Mammary epithelial cell (primary cell): ENCODE measurements at regions of chr14 and their contacts with region 1.

Region 1: DNA sequence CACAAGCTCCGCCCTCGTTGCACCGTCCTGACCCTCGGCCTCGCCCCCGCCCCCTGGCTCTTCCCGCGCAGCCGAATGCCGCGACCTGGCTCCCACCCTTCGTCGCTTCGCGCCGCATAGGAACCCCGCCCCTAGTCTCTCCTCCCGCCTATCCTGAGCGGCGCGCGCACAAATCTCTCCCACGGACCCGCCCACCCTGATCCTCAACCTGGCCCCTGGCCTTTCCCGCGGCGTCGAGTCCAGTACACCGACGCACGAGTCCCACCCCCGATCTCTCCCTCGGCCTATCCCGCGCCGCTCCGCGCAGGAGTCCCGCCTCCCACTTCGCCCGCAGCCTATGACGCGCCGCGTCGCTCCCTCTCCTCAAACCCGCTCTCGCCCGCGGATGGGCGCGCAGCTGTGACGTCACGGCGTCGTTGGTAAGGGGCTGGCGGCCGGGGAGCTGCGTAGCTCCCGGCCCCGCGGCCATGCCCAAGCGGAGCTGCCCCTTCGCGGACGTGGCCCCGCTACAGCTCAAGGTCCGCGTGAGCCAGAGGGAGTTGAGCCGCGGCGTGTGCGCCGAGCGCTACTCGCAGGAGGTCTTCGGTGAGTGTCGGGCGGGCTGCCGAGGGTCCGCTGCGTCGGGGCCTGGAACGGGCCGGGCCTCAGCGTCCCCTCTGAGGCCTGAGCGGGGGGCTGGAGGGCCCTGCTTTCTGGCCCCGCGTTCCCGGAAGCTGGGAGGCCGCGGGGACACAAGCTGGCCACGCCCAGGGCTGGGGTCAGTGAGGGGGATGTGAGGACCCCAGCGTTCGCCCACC is at the start of gene SIVA1:
- DNase-seq: peak; percentile 99
- H3K4me3 ChIP-seq: peak within 1 kb of the TSS; percentile 67 to 98 (median 97)
- H3K27ac ChIP-seq: peak within 1 kb of the TSS; percentile 63
- H3K4me1 ChIP-seq: peaks cover 37% of the 10 kb centered on the region
- H3K27me3 ChIP-seq: no peaks in the 10 kb centered on the region
- CTCF ChIP-seq: no peak
- total RNA-seq, gene SIVA1: 43.3 to 56.1 TPM

Region 2: DNA sequence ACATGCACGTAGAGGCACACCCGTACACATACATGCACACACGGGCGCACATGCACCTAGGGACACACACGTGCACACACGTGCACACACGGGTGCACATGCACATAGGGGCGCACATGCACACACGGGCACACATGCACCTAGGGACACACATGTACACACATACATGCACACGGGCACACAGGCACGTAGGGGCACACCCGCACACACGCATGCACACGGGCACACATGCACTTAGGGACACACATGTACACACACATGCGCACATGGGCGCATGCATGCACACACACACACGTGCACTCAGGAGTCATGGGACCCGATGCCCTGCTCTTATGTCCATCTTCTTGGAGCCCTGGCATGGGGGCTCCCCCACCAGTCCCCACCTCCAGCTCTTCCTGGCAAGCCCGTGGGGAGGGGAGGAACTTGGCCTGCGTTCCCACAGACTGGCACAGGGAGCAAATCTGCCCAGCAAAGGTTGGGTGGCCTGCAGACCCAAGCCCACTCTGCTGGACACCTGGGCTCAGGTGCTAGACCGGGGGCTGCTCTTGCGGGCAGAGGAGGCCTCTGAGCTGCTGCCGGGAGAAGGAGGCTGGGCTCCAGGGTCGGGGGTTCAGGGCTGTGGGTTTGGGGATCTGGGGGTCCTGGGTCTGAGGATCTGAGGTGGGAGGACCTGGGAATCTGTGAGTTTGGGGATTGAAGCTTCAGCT is 563.2 kb before region 1 on chr14:
- CTCF ChIA-PET with region 1: interaction called, 12 read pairs
- dilution Hi-C with region 1: no loop called
- in situ Hi-C with region 1: no loop called
- intact Hi-C with region 1: no loop called
- DNase-seq: no peak
- H3K4me3 ChIP-seq: no peak overlapping the region
- H3K27ac ChIP-seq: no peak overlapping the region
- H3K4me1 ChIP-seq: no peaks in the 10 kb centered on the region
- H3K27me3 ChIP-seq: no peaks in the 10 kb centered on the region
- CTCF ChIP-seq: no peak

Region 3: GRCh38 chr14:104708606-104709268 is 44.2 kb before region 1 on chr14:
- CTCF ChIA-PET with region 1: no interaction called
- dilution Hi-C with region 1: loop called (anchors 5 kb)
- in situ Hi-C with region 1: no loop called
- intact Hi-C with region 1: no loop called
- DNase-seq: no peak
- H3K4me3 ChIP-seq: no peak overlapping the region
- H3K27ac ChIP-seq: no peak overlapping the region
- H3K4me1 ChIP-seq: no peaks in the 10 kb centered on the region
- H3K27me3 ChIP-seq: no peaks in the 10 kb centered on the region
- CTCF ChIP-seq: peak; percentile 97 to 99

Region 4: GRCh38 chr14:104795788-104796686 is 43.1 kb after region 1 on chr14:
- CTCF ChIA-PET with region 1: no interaction called
- dilution Hi-C with region 1: no loop called
- in situ Hi-C with region 1: no loop called
- intact Hi-C with region 1: loop called (anchors 2 kb)
- DNase-seq: no peak
- H3K4me3 ChIP-seq: peak overlapping the region in 2 of 3 experiments; percentile 46 to 88
- H3K27ac ChIP-seq: no peak overlapping the region
- H3K4me1 ChIP-seq: peaks cover 38% of the 10 kb centered on the region
- H3K27me3 ChIP-seq: no peaks in the 10 kb centered on the region
- CTCF ChIP-seq: no peak

Region 5: DNA sequence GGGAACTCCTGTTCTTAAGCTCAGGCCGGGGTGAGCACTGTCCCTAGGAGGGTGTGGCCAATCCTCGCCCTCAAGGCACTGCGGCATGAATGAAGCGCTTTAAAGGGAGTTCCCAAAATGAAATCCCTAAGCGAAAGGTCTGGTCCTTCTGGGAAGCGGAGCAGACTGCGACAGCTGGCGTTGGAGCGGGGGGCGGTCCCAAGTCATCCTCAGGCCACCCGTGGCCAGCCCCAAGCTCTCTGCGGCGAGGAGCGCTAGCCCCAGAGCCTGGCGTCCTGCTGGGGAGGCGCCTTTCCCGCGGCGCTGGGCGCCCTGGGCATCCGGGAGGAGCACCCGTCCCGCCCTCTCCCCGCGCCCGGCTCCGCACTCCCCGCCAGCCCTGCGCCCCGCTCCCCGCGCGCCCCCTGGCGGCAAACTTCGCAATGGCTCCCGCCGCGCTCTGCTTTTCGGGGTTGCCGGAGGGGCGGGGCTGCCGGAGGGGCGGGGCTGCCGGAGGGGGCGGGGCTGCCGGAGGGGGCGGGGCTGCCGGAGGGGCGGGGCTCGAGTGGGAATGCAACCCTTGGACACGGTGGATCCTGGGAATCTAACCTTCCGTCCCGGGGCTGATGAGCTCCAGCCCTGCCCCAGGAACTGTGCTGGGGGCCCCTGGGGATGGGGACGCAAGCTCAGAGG is 73.4 kb after region 1 on chr14:
- CTCF ChIA-PET with region 1: interaction called, 7 read pairs
- dilution Hi-C with region 1: loop called (anchors 5 kb)
- in situ Hi-C with region 1: loop called in 1 of 2 experiments (anchors 5 kb)
- intact Hi-C with region 1: no loop called
- DNase-seq: peak; percentile 81
- H3K4me3 ChIP-seq: peak overlapping the region; percentile 56 to 74 (median 58)
- H3K27ac ChIP-seq: no peak overlapping the region
- H3K4me1 ChIP-seq: peaks cover 17% of the 10 kb centered on the region
- H3K27me3 ChIP-seq: no peaks in the 10 kb centered on the region
- CTCF ChIP-seq: peak; percentile 27 to 70

Region 6: DNA sequence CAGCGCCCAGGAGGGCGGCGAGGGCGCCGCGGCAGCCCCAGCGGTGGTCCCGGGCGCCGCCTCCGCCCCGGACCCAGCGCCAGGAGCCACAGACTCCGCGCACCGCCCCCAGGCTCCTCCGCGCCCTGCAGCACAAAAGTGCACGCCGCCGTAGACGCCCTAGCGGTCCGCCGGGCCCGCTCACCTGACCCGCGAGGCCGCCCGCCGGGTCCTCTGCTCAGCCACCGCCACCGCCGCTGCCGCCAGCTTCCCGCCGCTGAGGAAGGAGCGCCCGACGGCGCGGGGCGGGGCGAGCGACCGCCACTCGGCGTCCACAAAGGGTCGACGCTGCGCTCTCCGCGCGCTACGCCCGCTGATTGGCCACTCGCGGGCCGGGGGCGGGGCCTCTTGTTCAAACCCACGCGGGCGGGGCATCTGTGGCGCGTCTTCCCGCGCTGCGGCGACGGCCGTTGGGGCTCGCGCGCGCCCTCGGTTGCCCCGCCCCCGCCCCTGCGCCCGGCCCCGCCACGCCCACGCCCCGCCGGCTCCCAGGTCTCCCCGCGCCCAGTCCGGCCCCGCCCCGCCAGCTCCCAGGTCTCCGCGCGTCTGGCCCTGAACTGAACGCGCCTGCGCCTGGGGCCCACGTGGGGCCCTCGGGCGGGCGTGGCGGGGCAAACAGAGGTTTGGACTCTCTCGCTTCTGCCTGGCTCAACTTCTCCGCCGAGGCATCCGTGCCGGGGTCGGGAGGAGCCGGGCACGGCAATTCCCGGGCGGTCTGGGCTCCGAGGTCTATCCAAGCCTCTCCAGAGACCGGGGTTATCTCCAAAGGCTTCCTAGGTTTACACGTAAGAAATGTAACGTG is 268.1 kb after region 1 on chr14 and contains the start of gene CDCA4:
- CTCF ChIA-PET with region 1: no interaction called
- dilution Hi-C with region 1: no loop called
- in situ Hi-C with region 1: no loop called
- intact Hi-C with region 1: loop called (anchors 5 kb)
- DNase-seq: peak; percentile 96
- H3K4me3 ChIP-seq: peak within 1 kb of the TSS; percentile 82 to 97 (median 95)
- H3K27ac ChIP-seq: peak within 1 kb of the TSS; percentile 94
- H3K4me1 ChIP-seq: peaks cover 68% of the 10 kb centered on the region
- H3K27me3 ChIP-seq: no peaks in the 10 kb centered on the region
- CTCF ChIP-seq: no peak
- total RNA-seq, gene CDCA4: 38.2 to 61.7 TPM